CD4-positive, alpha-beta T cell (primary cell): ENCODE measurements at regions of chr5 and their contacts with region 1.

Region 1: DNA sequence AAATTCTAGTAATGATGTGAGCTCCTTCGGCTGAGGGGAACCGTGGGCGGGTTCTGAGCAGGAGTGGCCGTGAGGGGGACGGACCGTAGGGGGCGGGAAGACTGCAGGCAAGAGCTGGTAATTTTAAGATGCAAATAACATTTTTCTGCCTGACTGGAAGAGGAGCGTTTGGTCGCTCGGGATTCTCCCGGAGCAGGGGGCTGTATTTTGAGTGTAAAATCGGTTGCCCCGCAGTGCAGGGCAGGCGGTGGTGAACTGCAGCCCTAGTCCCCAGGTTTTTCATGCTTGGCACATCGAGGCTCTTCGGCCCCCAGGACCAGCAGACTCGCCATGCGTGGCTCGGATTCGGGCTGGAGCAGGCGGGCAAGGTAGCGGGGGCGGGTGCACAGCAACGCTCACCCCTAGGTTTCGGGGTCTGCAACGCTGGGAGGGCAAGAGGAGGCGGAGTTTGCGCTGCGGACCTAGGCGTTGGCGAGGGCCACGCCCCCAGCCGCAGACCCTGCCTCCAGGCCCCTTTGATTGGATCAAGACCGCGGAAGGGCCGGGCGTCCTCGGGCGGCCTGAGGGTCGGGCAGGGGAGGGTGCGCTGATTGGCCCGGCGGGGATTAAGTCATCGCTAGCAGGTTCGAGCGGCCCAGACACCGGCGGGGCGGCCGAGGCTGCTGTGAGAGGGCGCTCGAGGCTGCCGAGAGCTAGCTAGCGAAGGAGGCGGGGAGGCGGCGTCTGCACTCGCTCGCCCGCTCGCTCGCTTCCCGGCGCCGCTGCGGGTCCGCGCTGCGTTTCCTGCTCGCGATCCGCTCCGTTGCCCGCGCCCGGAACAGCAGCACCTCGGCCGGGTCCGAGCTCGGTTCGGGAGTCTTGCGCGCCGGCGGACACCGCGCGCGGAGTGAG is at the start of gene ARHGAP26:
- DNase-seq: peak; percentile 81 to 96 (median 91)
- ATAC-seq: peak; percentile 83
- H3K4me3 ChIP-seq: peak within 1 kb of the TSS; percentile 99
- H3K4me3 Mint-ChIP-seq: peak within 1 kb of the TSS; percentile 96
- H3K27ac ChIP-seq: peak within 1 kb of the TSS; percentile 69 to 72
- H3K27ac Mint-ChIP-seq: peak within 1 kb of the TSS; percentile 87
- H3K4me1 ChIP-seq: peaks cover 32% of the 10 kb centered on the region
- H3K4me1 Mint-ChIP-seq: peaks cover 32% of the 10 kb centered on the region
- H3K27me3 ChIP-seq: no peaks in the 10 kb centered on the region
- H3K27me3 Mint-ChIP-seq: no peaks in the 10 kb centered on the region
- CTCF ChIP-seq: peak; percentile 27
- total RNA-seq, gene ARHGAP26: 24.9 to 27.3 TPM

Region 2: DNA sequence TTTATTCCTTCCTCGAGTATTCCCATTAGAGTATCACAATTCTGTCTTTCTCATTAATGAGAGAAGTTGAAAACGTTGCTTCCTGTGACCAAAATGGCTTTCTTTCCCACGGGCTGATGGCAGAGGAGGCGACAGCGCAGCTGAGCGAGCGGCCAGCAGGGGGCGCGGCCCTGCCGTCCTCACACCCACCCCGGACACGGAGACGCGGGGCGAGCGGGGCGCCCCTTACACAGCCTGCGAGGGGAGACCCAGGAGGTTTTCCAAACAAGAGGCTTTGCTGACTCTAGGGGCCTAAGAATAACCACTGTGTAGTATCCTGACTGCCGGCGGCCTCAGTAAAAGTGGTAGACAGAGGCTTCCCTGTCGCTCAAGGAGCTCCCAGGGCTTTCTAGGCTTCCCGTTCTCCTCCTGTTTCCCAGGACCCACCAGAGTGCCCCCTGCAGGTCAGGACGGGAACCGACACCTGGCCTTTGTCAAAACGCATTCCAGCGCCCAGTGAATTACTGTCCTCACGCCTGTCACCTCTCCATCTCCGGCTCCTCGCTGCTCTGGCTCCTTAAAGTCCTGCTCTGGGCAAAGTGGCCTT is 56.8 kb before region 1 on chr5:
- CTCF ChIA-PET with region 1: interaction called, 11 read pairs
- POLR2A ChIA-PET with region 1: interaction called, 3 read pairs
- intact Hi-C with region 1: no loop called
- DNase-seq: peak; percentile 70 to 93 (median 79)
- ATAC-seq: peak; percentile 93
- H3K4me3 ChIP-seq: peak overlapping the region; percentile 50
- H3K4me3 Mint-ChIP-seq: peak overlapping the region; percentile 76
- H3K27ac ChIP-seq: no peak overlapping the region
- H3K27ac Mint-ChIP-seq: no peak overlapping the region
- H3K4me1 ChIP-seq: peaks cover 15% of the 10 kb centered on the region
- H3K4me1 Mint-ChIP-seq: peaks cover 17% of the 10 kb centered on the region
- H3K27me3 ChIP-seq: peaks cover 0 to 3% of the 10 kb centered on the region in 2 experiments
- H3K27me3 Mint-ChIP-seq: peaks cover 9% of the 10 kb centered on the region
- CTCF ChIP-seq: peak; percentile 99

Region 3: DNA sequence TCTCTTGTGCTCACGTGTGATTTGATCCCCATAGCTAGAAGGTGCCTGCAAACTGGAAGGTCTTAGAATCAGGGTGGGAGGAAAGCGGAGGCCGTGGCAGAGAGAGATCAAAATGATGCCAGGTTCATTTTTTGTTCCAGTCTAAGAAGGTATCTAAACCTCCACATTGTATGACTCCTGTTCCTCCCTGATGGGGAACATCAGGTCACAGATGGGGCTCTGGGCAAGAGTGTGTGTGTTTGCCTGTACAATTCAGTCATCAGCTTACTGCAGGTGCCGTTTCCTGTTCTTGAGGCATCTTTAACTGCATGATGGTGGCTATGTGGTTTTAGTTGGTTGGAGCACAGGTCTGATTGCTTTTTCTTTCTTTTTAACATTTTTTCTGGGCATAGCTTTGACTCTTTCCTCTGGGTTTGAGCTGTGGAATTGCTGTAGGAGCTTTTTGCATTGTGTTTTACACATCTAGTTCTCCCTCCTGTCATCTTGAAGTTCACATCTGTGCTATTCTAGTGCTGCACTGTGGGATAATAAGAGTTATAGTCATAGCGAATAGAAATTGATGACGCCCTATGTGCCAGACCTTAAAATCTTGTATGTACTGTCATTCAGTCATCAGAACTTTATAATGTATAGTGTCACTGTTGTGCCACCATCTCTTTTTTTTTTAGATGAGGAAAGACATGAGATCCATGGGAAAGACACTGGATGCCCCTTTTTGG is 30.9 kb after region 1 on chr5:
- CTCF ChIA-PET with region 1: no interaction called
- POLR2A ChIA-PET with region 1: interaction called, 109 read pairs
- intact Hi-C with region 1: loop called in 1 of 2 experiments (anchors 2 kb)
- DNase-seq: peak in 13 of 14 experiments; percentile 10 to 76 (median 31)
- ATAC-seq: peak; percentile 84
- H3K4me3 ChIP-seq: peak overlapping the region; percentile 4
- H3K4me3 Mint-ChIP-seq: peak overlapping the region; percentile 56
- H3K27ac ChIP-seq: peak overlapping the region; percentile 37 to 64
- H3K27ac Mint-ChIP-seq: peak overlapping the region; percentile 85
- H3K4me1 ChIP-seq: peaks cover 46% of the 10 kb centered on the region
- H3K4me1 Mint-ChIP-seq: peaks cover 66% of the 10 kb centered on the region
- H3K27me3 ChIP-seq: no peaks in the 10 kb centered on the region
- H3K27me3 Mint-ChIP-seq: no peaks in the 10 kb centered on the region
- CTCF ChIP-seq: no peak

Region 4: DNA sequence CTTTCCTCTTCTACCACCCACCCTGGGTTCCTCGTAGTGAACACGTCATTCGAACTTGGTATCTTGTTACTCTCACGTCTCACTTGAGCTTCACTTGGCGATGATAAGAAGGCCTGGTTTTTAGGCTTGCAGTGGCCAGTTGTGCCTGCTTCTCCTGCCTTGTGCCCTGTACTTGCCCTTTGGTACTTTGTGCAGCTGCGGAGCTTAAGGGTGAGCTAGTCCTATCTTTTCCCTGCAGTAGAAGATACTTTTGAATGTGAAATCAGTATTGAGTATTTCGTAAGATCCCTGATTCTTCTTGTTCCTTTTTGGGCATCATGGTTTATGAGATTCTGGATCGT is 67.4 kb after region 1 on chr5:
- CTCF ChIA-PET with region 1: no interaction called
- POLR2A ChIA-PET with region 1: no interaction called
- intact Hi-C with region 1: no loop called
- DNase-seq: peak in 2 of 14 experiments; percentile 41 to 50
- ATAC-seq: no peak
- H3K4me3 ChIP-seq: no peak overlapping the region
- H3K4me3 Mint-ChIP-seq: no peak overlapping the region
- H3K27ac ChIP-seq: no peak overlapping the region
- H3K27ac Mint-ChIP-seq: no peak overlapping the region
- H3K4me1 ChIP-seq: no peaks in the 10 kb centered on the region
- H3K4me1 Mint-ChIP-seq: peaks cover 31% of the 10 kb centered on the region
- H3K27me3 ChIP-seq: no peaks in the 10 kb centered on the region
- H3K27me3 Mint-ChIP-seq: no peaks in the 10 kb centered on the region
- CTCF ChIP-seq: no peak

Region 5: DNA sequence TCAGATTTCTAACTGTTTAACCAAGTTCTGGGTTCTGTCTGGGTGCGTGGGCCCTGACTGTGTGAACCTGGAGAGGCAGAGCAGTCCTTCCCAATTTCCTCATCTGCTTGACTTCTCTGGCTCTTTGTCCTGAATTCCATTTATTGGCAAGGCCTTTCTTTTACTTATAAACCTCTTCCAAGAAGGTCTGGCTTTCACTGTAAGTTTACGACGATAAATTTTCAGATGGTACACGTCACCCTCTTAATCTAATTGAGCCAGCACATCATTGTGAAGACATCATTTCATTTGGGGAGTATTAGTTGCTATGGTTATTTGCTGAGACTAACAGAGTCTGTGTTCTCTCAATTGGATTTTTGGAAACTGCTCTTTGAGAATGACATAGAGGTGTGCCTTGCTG is 92.6 kb after region 1 on chr5:
- CTCF ChIA-PET with region 1: interaction called, 28 read pairs
- POLR2A ChIA-PET with region 1: interaction called, 13 read pairs
- intact Hi-C with region 1: loop called (anchors 1 to 2 kb)
- DNase-seq: no peak
- ATAC-seq: no peak
- H3K4me3 ChIP-seq: no peak overlapping the region
- H3K4me3 Mint-ChIP-seq: no peak overlapping the region
- H3K27ac ChIP-seq: no peak overlapping the region
- H3K27ac Mint-ChIP-seq: no peak overlapping the region
- H3K4me1 ChIP-seq: peaks cover 22% of the 10 kb centered on the region
- H3K4me1 Mint-ChIP-seq: peaks cover 58% of the 10 kb centered on the region
- H3K27me3 ChIP-seq: no peaks in the 10 kb centered on the region
- H3K27me3 Mint-ChIP-seq: no peaks in the 10 kb centered on the region
- CTCF ChIP-seq: no peak

Region 6: GRCh38 chr5:143002459-143003328 is 232.7 kb after region 1 on chr5:
- CTCF ChIA-PET with region 1: no interaction called
- POLR2A ChIA-PET with region 1: interaction called, 5 read pairs
- intact Hi-C with region 1: loop called in 1 of 2 experiments (anchors 10 kb)
- DNase-seq: peak in 13 of 14 experiments; percentile 10 to 91 (median 37)
- ATAC-seq: peak; percentile 83
- H3K4me3 ChIP-seq: peak overlapping the region; percentile 3
- H3K4me3 Mint-ChIP-seq: peak overlapping the region; percentile 55
- H3K27ac ChIP-seq: peak overlapping the region; percentile 76 to 87
- H3K27ac Mint-ChIP-seq: peak overlapping the region; percentile 91
- H3K4me1 ChIP-seq: peaks cover 33% of the 10 kb centered on the region
- H3K4me1 Mint-ChIP-seq: peaks cover 48% of the 10 kb centered on the region
- H3K27me3 ChIP-seq: no peaks in the 10 kb centered on the region
- H3K27me3 Mint-ChIP-seq: no peaks in the 10 kb centered on the region
- CTCF ChIP-seq: peak; percentile 73